H1 (cell line): ENCODE measurements at regions of chr6 and their contacts with region 1.

Region 1: GRCh38 chr6:114364289-114364688 is 21.5 kb upstream of the HS3ST5 start:
- DNase-seq: no peak
- H3K4me3 ChIP-seq: no peak overlapping the region
- H3K27ac ChIP-seq: no peak overlapping the region
- H3K4me1 ChIP-seq: peaks cover 0 to 21% (median 11%) of the 10 kb centered on the region in 4 experiments; a peak in 6 of 7 replicates
- H3K27me3 ChIP-seq: no peaks in the 10 kb centered on the region
- CTCF ChIP-seq: no peak
- EP300 ChIP-seq: no peak
- POLR2A ChIP-seq: no peak
- RAD21 ChIP-seq: no peak

Region 2: GRCh38 chr6:114342826-114343780 is 21.2 kb before region 1 on chr6 and contains the start of gene HS3ST5:
- CTCF ChIA-PET with region 1: interaction called, 6 read pairs
- POLR2A ChIA-PET with region 1: interaction called, 26 read pairs
- DNase-seq: peak in 1 of 2 experiments; percentile 89
- H3K4me3 ChIP-seq: peak within 1 kb of the TSS; percentile 80 to 98 (median 82)
- H3K27ac ChIP-seq: peak within 1 kb of the TSS; percentile 56
- H3K4me1 ChIP-seq: peaks cover 0 to 15% (median 7%) of the 10 kb centered on the region in 4 experiments; a peak in 4 of 7 replicates
- H3K27me3 ChIP-seq: no peaks in the 10 kb centered on the region
- CTCF ChIP-seq: peak; percentile 76 to 84 (median 83)
- EP300 ChIP-seq: 0 out of 3 replicates have a peak, but pooled peaks of 1 of the 2 experiments have one; percentile 32
- POLR2A ChIP-seq: 0 out of 3 replicates have a peak, but pooled peaks of 1 of the 2 experiments have one; percentile 67
- RAD21 ChIP-seq: peak; percentile 88 to 90
- total RNA-seq, gene HS3ST5: 9.9 and 11.2 TPM in 2 replicates

Region 3: DNA sequence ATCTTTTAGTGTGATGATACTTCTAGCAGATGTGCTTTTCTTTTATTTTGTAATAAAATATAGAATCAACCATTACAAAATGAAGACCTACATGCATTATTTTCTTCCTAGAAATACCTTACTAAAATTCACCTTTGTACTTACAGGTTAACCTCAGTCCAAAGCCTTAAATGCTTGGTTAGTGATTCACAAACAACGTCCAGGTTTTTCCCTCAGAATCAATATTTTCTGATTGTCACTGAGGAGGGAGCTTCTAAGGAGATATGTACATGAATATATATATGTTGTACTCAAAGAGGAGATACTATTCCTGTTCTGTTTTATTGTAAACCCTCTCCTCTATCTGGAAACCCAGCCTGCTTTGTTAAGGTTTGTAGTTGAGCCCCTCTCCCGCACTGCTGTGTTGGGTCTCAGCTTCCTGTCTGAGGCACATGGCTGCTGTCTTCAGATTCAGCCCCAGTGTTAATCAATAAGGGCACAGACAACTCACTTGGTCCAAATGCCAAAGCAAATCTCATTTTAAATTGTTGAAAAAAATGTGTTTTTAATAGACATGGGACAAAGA is 12.4 kb after region 1 on chr6:
- CTCF ChIA-PET with region 1: no interaction called
- POLR2A ChIA-PET with region 1: interaction called, 10 read pairs
- DNase-seq: no peak
- H3K4me3 ChIP-seq: no peak overlapping the region
- H3K27ac ChIP-seq: no peak overlapping the region
- H3K4me1 ChIP-seq: peaks cover 0 to 9% (median 4%) of the 10 kb centered on the region in 4 experiments; a peak in 2 of 7 replicates
- H3K27me3 ChIP-seq: no peaks in the 10 kb centered on the region
- CTCF ChIP-seq: no peak
- EP300 ChIP-seq: no peak
- POLR2A ChIP-seq: no peak
- RAD21 ChIP-seq: no peak